Aorta (tissue), 5 donors: ENCODE measurements at regions of chr3 and their contacts with region 1.

Region 1: GRCh38 chr3:79111375-79112052 is 656.3 kb downstream of the ROBO1 start:
- DNase-seq: no peak
- ATAC-seq: no peak
- H3K4me3 ChIP-seq: no peak overlapping the region
- H3K27ac ChIP-seq: no peak overlapping the region
- H3K4me1 ChIP-seq: no peaks in the 10 kb centered on the region
- H3K27me3 ChIP-seq: no peaks in the 10 kb centered on the region

Region 2: GRCh38 chr3:79361748-79362378 is 250.3 kb after region 1 on chr3:
- intact Hi-C with region 1: loop called in 1 of 2 experiments (anchors 10 kb)
- DNase-seq: no peak
- ATAC-seq: no peak
- H3K4me3 ChIP-seq: no peak overlapping the region
- H3K27ac ChIP-seq: no peak overlapping the region
- H3K4me1 ChIP-seq: no peaks in the 10 kb centered on the region
- H3K27me3 ChIP-seq: no peaks in the 10 kb centered on the region